Right lobe of liver (tissue), 6 donors: ENCODE measurements at regions of chr2 and their contacts with region 1.

Region 1: GRCh38 chr2:240851078-240851991 is 17.3 kb upstream of the AGXT start:
- DNase-seq: peak; percentile 83 to 91 (median 88)
- ATAC-seq: peak; percentile 84 to 95 (median 89)
- H3K4me3 ChIP-seq: no peak overlapping the region
- H3K27ac ChIP-seq: no peak overlapping the region
- H3K4me1 ChIP-seq: peaks cover 0 to 24% (median 9%) of the 10 kb centered on the region in 4 donors
- H3K27me3 ChIP-seq: no peaks in the 10 kb centered on the region
- CTCF ChIP-seq: peak; percentile 96 to 99 (median 98)
- POLR2A ChIP-seq: no peak

Region 2: GRCh38 chr2:240722796-240723735 is 128.3 kb before region 1 on chr2:
- intact Hi-C with region 1: no loop called
- DNase-seq: no peak
- ATAC-seq: no peak
- H3K4me3 ChIP-seq: no peak overlapping the region
- H3K27ac ChIP-seq: no peak overlapping the region
- H3K4me1 ChIP-seq: no peaks in the 10 kb centered on the region
- H3K27me3 ChIP-seq: no peaks in the 10 kb centered on the region
- CTCF ChIP-seq: no peak
- POLR2A ChIP-seq: no peak

Region 3: GRCh38 chr2:240983361-240983995 is 132.1 kb after region 1 on chr2:
- intact Hi-C with region 1: loop called in 1 of 2 experiments (anchors 10 kb)
- DNase-seq: peak; percentile 56 to 67 (median 62)
- ATAC-seq: peak; percentile 38 to 67 (median 50)
- H3K4me3 ChIP-seq: peak overlapping the region in 2 of 3 donors; percentile 31 to 38
- H3K27ac ChIP-seq: no peak overlapping the region
- H3K4me1 ChIP-seq: peaks cover 3 to 36% (median 17%) of the 10 kb centered on the region in 4 donors
- H3K27me3 ChIP-seq: no peaks in the 10 kb centered on the region
- CTCF ChIP-seq: peak; percentile 40 to 76 (median 64)
- POLR2A ChIP-seq: no peak

Region 4: GRCh38 chr2:240998120-240998994 is 147.0 kb after region 1 on chr2 and contains the start of gene SNED1:
- intact Hi-C with region 1: loop called in 1 of 2 experiments (anchors 10 kb)
- DNase-seq: peak; percentile 93 to 94 (median 93)
- ATAC-seq: peak; percentile 76 to 87 (median 82)
- H3K4me3 ChIP-seq: peak within 1 kb of the TSS; percentile 57 to 88 (median 77)
- H3K27ac ChIP-seq: peak within 1 kb of the TSS; percentile 75 to 91 (median 75)
- H3K4me1 ChIP-seq: peaks cover 0 to 57% (median 23%) of the 10 kb centered on the region in 4 donors
- H3K27me3 ChIP-seq: no peaks in the 10 kb centered on the region
- CTCF ChIP-seq: no peak
- POLR2A ChIP-seq: peak; percentile 58
- total RNA-seq, gene SNED1: 7.4 to 27.8 (median 13.2) TPM